Activated CD8-positive, alpha-beta memory T cell treated with anti-CD3 and anti-CD28 coated beads, Interleukin-2, amount 10 ng/mL, durations not matched to agents 7 days and 5 days (primary cell): ENCODE measurements at regions of chr12 and their contacts with region 1.

Region 1: GRCh38 chr12:96336489-96336888 is 63.8 kb downstream of the CDK17 start:
- DNase-seq: no peak
- ATAC-seq: no peak
- H3K4me3 Mint-ChIP-seq: no peak overlapping the region
- H3K27ac Mint-ChIP-seq: no peak overlapping the region
- H3K4me1 Mint-ChIP-seq: peaks cover 24% of the 10 kb centered on the region
- H3K27me3 Mint-ChIP-seq: no peaks in the 10 kb centered on the region

Region 2: GRCh38 chr12:96347130-96347699 is 10.7 kb after region 1 on chr12:
- CTCF ChIA-PET with region 1: interaction called, 10 read pairs
- DNase-seq: no peak
- ATAC-seq: no peak
- H3K4me3 Mint-ChIP-seq: peak overlapping the region; percentile 14
- H3K27ac Mint-ChIP-seq: peak overlapping the region; percentile 56
- H3K4me1 Mint-ChIP-seq: peaks cover 60% of the 10 kb centered on the region
- H3K27me3 Mint-ChIP-seq: no peaks in the 10 kb centered on the region